ENCODE measurements at regions of chr3 and their contacts with region 1.

Region 1: DNA sequence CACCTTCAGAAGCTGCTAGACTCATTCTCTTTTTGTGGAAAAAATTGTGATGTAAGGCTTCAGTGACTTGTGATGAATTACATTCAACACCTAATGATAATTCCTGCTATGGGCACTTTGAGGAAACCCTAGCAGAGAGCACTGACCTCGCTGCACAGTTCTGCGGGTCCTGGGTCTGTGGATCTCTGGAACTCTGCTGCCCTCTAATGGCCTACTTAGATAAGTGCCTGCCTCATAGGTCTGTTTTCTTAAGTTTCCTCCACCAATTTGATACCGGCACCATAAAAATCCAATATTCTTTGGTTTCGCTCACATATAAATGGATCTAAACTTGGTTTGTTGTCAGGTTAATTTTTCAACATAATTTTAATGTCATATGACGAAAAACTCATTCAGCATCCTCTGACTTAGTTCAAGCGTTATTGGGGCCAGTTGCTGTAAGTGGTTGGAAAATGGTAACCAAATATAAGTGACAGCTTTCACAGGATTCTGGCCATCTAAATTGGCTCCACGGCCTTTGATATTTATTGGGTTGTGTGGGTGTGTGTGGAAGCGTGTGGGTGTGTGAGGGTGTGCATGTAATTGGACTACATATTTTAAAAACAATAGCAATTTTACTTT is 10.4 kb downstream of the SLITRK3 start:
- DNase-seq: peak; percentile 59 to 73
- H3K4me3 ChIP-seq: no peak overlapping the region
- H3K4me1 ChIP-seq: peaks cover 5% of the 10 kb centered on the region; the same call in 1 of the 2 replicates
- H3K27me3 ChIP-seq: no peaks in the 10 kb centered on the region

Region 2: GRCh38 chr3:164418414-164418813 is 767.4 kb before region 1 on chr3:
- in situ Hi-C with region 1: loop called (anchors 25 kb)
- DNase-seq: peak; percentile 34 to 69
- H3K4me3 ChIP-seq: no peak overlapping the region
- H3K4me1 ChIP-seq: no peaks in the 10 kb centered on the region
- H3K27me3 ChIP-seq: no peaks in the 10 kb centered on the region

Measured in HAP-1 (cell line).